Activated CD4-positive, alpha-beta T cell treated with anti-CD3 and anti-CD28 coated beads for 36 hours (primary cell): ENCODE measurements at regions of chr9 and their contacts with region 1.

Region 1: DNA sequence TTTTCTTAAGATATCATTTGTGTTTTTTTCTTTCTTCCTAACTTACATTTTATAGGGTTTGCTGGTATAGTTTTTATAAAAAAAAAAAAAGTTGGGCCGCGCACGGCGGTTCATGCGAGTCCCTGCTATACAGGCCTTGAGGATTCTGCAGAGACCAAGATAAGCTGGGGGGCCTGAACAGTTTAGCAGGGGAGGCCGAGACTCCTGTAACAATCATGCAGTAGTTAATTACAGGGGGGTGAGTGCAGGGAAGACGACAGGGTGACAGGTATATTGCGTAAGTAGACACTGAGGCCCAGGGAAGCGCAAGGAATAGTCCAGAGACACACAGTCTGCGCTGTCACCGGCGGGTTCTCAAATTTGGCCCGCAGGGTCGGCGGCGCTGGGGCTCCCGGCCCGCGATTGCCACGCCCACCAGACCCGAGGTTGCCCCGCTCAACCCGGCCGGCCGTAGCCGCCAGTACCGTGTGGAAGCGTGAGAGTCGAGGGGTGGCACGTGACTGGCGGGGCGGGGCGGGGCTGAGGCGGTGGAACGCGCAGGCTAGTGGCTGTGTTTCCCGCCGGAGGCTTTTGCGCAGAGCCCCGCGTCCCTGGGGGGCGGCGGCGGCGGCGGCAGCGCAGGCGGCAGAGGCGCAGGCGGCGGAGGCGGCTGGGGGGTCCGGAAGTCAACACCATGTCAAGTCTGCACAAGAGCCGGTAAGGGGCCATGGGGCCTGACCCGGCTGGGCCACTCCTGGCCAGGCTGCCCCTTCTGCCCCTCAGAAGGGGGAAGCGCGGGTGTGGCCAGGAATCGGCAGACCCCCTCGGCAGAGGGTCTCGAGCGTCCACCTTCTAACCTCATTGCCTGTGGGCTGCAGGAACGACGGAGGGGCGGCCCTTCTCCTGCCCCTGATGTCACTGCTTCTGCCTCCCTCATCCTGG is at the start of gene TBC1D13:
- DNase-seq: peak; percentile 94
- ATAC-seq: peak; percentile 97
- H3K4me3 Mint-ChIP-seq: peak within 1 kb of the TSS; percentile 87
- H3K27ac Mint-ChIP-seq: peak within 1 kb of the TSS; percentile 87
- H3K4me1 Mint-ChIP-seq: peaks cover 18% of the 10 kb centered on the region
- H3K27me3 Mint-ChIP-seq: no peaks in the 10 kb centered on the region
- total RNA-seq, gene TBC1D13: 10.5 to 14.0 TPM

Region 2: GRCh38 chr9:128504485-128505413 is 282.2 kb before region 1 on chr9 and contains the start of gene GLE1:
- CTCF ChIA-PET with region 1: interaction called, 4 read pairs
- POLR2A ChIA-PET with region 1: no interaction called
- intact Hi-C with region 1: loop called in 1 of 2 experiments (anchors 1 kb)
- DNase-seq: peak; percentile 98
- ATAC-seq: peak; percentile 99
- H3K4me3 Mint-ChIP-seq: peak within 1 kb of the TSS; percentile 95
- H3K27ac Mint-ChIP-seq: peak within 1 kb of the TSS; percentile 99
- H3K4me1 Mint-ChIP-seq: peaks cover 21% of the 10 kb centered on the region
- H3K27me3 Mint-ChIP-seq: no peaks in the 10 kb centered on the region
- total RNA-seq, gene GLE1: 52.5 to 54.4 TPM

Region 3: GRCh38 chr9:128528445-128529160 is 258.3 kb before region 1 on chr9:
- CTCF ChIA-PET with region 1: no interaction called
- POLR2A ChIA-PET with region 1: no interaction called
- intact Hi-C with region 1: no loop called
- DNase-seq: no peak
- ATAC-seq: no peak
- H3K4me3 Mint-ChIP-seq: no peak overlapping the region
- H3K27ac Mint-ChIP-seq: no peak overlapping the region
- H3K4me1 Mint-ChIP-seq: no peaks in the 10 kb centered on the region
- H3K27me3 Mint-ChIP-seq: no peaks in the 10 kb centered on the region

Region 4: GRCh38 chr9:128702445-128702948 is 84.4 kb before region 1 on chr9 and contains the start of gene PKN3:
- CTCF ChIA-PET with region 1: interaction called, 5 read pairs
- POLR2A ChIA-PET with region 1: no interaction called
- intact Hi-C with region 1: loop called (anchors 2 to 5 kb)
- DNase-seq: peak; percentile 95
- ATAC-seq: peak; percentile 85
- H3K4me3 Mint-ChIP-seq: peak within 1 kb of the TSS; percentile 73
- H3K27ac Mint-ChIP-seq: peak within 1 kb of the TSS; percentile 74
- H3K4me1 Mint-ChIP-seq: peaks cover 10% of the 10 kb centered on the region
- H3K27me3 Mint-ChIP-seq: no peaks in the 10 kb centered on the region
- total RNA-seq, gene PKN3: 14.6 to 14.9 TPM

Region 5: GRCh38 chr9:128829477-128830251 is 42.7 kb after region 1 on chr9 and contains the start of gene SPOUT1:
- CTCF ChIA-PET with region 1: no interaction called
- POLR2A ChIA-PET with region 1: no interaction called
- intact Hi-C with region 1: loop called in 1 of 2 experiments (anchors 1 kb)
- DNase-seq: peak; percentile 96
- ATAC-seq: peak; percentile 98
- H3K4me3 Mint-ChIP-seq: peak within 1 kb of the TSS; percentile 91
- H3K27ac Mint-ChIP-seq: peak within 1 kb of the TSS; percentile 88
- H3K4me1 Mint-ChIP-seq: peaks cover 23% of the 10 kb centered on the region
- H3K27me3 Mint-ChIP-seq: no peaks in the 10 kb centered on the region
- total RNA-seq, gene SPOUT1: 87.9 to 92.9 TPM

Region 6: DNA sequence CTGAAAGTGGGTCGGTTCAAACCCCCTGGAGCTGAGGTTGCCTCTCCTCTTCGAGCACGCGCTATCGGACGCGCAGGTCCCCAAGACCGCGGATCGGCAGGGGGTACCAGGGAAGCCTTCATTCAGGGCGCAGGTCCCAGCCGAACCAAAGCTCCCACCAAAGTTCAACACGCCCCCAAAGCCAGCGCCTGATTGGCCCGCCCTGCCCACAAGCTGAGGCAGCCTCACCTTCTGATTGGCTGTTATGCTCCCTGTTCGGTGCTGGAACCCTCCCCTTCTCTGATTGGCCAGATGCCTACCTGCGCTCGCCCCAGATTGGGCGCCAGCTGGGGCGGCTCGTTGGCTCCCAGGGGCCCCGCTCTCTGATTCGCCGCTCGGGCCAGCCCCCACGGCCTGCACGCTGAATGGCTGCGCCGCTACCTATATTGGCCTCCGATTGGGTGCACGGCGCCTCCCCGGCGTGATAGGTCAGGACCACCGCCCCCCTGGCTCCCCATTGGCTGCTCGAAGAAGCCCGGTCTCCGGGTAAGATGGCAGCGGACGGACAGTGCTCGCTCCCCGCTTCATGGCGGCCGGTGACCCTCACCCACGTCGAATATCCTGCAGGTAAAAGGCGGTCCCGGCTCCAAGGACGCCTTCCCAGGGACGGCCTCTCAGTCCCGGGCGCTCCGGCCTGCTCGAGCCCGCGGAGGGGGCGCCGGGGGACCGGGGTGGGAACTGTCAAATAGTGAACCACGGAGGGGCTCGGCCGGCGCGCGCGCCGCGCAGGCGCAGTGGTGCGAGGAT is 293.9 kb after region 1 on chr9 and contains the start of gene DOLPP1:
- CTCF ChIA-PET with region 1: no interaction called
- POLR2A ChIA-PET with region 1: no interaction called
- intact Hi-C with region 1: loop called in 1 of 2 experiments (anchors 2 kb)
- DNase-seq: peak; percentile 99
- ATAC-seq: peak; percentile 98
- H3K4me3 Mint-ChIP-seq: peak within 1 kb of the TSS; percentile 83
- H3K27ac Mint-ChIP-seq: peak within 1 kb of the TSS; percentile 63
- H3K4me1 Mint-ChIP-seq: peaks cover 20% of the 10 kb centered on the region
- H3K27me3 Mint-ChIP-seq: no peaks in the 10 kb centered on the region
- total RNA-seq, gene DOLPP1: 15.1 to 16.4 TPM